Heart right ventricle (tissue), 16 donors: ENCODE measurements at regions of chr17 and their contacts with region 1.

Region 1: DNA sequence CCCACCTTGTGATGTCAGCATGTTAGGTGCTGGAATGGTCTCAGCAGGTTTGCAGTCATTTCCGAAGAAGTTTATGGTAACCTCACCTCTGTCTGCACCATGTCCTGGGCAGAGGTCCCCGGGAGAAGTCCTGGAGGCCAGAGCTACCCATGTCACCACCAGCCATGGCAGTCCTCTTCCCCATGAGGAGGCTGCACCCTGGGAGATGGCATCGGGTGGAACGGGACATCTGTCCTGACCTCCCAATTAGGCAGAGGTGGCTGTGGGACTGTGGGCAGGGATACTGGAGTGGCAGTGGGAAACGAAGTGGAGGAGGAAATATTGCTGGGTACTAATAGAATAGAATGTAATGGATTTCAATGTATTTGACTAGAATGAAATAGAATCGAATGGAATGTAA is 511.8 kb upstream of the WSB1 start:
- DNase-seq: no peak
- ATAC-seq: no peak
- H3K4me3 ChIP-seq: no peak overlapping the region
- H3K27ac ChIP-seq: no peak overlapping the region
- H3K4me1 ChIP-seq: no peaks in the 10 kb centered on the region
- H3K27me3 ChIP-seq: peaks cover 0 to 24% (median 0%) of the 10 kb centered on the region in 7 donors
- CTCF ChIP-seq: no peak

Region 2: GRCh38 chr17:26818736-26819135 is 36.6 kb after region 1 on chr17:
- intact Hi-C with region 1: no loop called
- DNase-seq: no peak
- ATAC-seq: no peak
- H3K4me3 ChIP-seq: no peak overlapping the region
- H3K27ac ChIP-seq: no peak overlapping the region
- H3K4me1 ChIP-seq: no peaks in the 10 kb centered on the region
- H3K27me3 ChIP-seq: no peaks in the 10 kb centered on the region
- CTCF ChIP-seq: no peak

Region 3: GRCh38 chr17:27009087-27009486 is 226.9 kb after region 1 on chr17:
- intact Hi-C with region 1: no loop called
- DNase-seq: no peak
- ATAC-seq: no peak
- H3K4me3 ChIP-seq: no peak overlapping the region
- H3K27ac ChIP-seq: no peak overlapping the region
- H3K4me1 ChIP-seq: no peaks in the 10 kb centered on the region
- H3K27me3 ChIP-seq: peaks cover 0 to 6% (median 0%) of the 10 kb centered on the region in 7 donors
- CTCF ChIP-seq: no peak

Region 4: GRCh38 chr17:27089929-27090247 is 307.7 kb after region 1 on chr17:
- intact Hi-C with region 1: loop called in 1 of 10 experiments (anchors 10 kb)
- DNase-seq: no peak
- ATAC-seq: no peak
- H3K4me3 ChIP-seq: no peak overlapping the region
- H3K27ac ChIP-seq: no peak overlapping the region
- H3K4me1 ChIP-seq: no peaks in the 10 kb centered on the region
- H3K27me3 ChIP-seq: peaks cover 0 to 20% (median 5%) of the 10 kb centered on the region in 7 donors
- CTCF ChIP-seq: no peak